HCT116 (cell line): ENCODE measurements at regions of chr15 and their contacts with region 1.

Region 1: GRCh38 chr15:32870240-32871033 is 152.6 kb downstream of the GREM1 start:
- DNase-seq: peak; percentile 94
- ATAC-seq: peak; percentile 75
- H3K4me3 ChIP-seq: peak overlapping the region in 1 of 2 experiments; percentile 31; a peak in 2 of 4 replicates
- H3K27ac ChIP-seq: peak overlapping the region; percentile 50; the same call in 1 of the 2 replicates
- H3K4me1 ChIP-seq: peaks cover 21 to 54% of the 10 kb centered on the region in 2 experiments
- H3K27me3 ChIP-seq: no peaks in the 10 kb centered on the region
- CTCF ChIP-seq: no peak
- POLR2A ChIP-seq: no peak
- RAD21 ChIP-seq: no peak

Region 2: DNA sequence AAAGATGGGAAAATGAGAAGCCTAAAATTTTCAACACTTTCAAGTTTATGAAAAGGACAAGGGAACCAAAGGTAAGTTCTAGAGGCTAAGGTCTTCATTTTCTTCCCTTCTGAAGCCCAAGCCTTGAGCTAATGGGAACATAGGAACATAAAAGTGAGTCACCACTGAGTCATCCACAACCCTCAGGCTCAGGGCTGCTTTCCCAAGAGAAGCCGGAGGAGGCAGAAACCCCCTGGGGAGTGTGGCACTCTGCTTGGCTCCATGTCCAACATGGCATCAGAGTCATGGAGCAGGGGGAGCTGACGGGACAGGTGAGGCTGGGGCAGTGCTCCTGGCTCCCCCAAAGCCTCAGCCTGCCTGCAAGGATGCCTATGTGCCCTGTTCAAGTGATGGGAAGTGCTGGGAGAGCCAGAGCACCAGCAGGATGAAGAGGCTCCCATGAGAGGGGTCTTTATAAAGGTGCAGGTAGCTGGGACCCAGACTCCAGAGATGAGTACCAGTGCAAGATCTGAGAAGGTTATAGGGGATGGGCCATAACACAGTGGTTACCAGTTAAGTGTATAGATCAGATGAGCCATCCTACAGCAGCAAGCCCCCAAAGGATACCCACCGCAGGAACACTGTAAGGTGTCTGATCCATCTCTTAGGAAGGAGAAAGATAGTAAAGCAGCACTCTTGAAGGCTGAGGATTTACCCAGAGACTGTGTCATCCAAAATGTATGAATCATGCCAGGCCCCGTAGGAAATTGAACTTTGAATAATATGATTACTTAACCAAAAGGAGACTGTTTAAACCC is 408.6 kb after region 1 on chr15:
- CTCF ChIA-PET with region 1: no interaction called
- POLR2A ChIA-PET with region 1: no interaction called
- RAD21 ChIA-PET with region 1: no interaction called
- intact Hi-C with region 1: loop called (anchors 10 kb)
- DNase-seq: peak; percentile 92
- ATAC-seq: peak; percentile 99
- H3K4me3 ChIP-seq: peak overlapping the region in 1 of 2 experiments; percentile 5; a peak in 1 of 4 replicates
- H3K27ac ChIP-seq: peak overlapping the region; percentile 42; the same call in 1 of the 2 replicates
- H3K4me1 ChIP-seq: peaks cover 15 to 18% of the 10 kb centered on the region in 2 experiments
- H3K27me3 ChIP-seq: no peaks in the 10 kb centered on the region
- CTCF ChIP-seq: peak in 2 of 3 experiments; percentile 18 to 28; a peak in 2 of 6 replicates
- POLR2A ChIP-seq: no peak
- RAD21 ChIP-seq: no peak